Gastrocnemius medialis (tissue), 4 donors: ENCODE measurements at regions of chr5 and their contacts with region 1.

Region 1: DNA sequence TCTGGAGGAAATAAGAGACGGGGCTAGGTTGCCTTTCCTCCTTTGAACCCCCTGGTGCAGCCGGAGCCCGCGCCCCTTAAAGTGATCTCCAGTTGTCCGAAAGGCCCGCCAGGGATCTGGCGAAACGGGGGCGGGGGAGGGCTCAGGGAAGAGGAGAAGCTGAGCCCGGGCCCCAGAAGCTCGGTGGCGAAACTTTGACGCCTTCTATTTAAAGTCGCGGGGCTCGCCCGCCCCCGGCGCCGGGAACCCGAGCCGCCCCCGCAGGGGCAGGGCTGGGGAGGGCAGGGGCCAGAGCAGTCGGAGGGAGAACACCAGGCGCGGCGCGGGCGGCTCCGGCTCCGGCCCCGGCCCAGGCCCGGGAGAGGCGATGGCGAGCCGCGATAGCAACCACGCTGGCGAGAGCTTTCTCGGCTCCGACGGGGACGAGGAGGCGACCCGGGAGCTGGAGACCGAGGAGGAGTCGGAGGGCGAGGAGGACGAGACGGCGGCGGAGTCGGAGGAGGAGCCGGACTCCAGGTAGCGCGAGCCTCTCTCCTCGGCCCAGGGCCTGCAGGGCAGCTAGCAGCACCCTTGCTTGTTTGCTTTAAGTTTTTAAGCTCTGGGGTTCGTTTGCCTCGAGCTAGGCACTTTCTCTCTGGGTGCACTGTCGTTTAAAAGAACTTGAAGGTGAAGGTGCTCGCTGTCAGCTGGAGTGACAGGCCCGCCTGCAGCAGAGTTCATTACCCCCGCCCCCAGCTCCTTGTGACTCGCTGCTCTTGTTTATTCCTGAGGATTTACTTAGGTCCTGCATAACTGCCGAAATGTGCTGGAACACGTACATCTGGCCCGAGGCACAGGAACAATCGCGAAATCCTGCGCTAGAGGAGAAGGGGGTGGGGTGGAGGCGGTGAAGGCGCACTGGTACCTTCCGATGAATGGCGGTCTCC is at the start of gene CMYA5:
- DNase-seq: peak; percentile 94 to 98
- ATAC-seq: peak; percentile 75 to 79
- H3K4me3 ChIP-seq: peak within 1 kb of the TSS; percentile 75 to 83 (median 81)
- H3K27ac ChIP-seq: peak within 1 kb of the TSS; percentile 99
- H3K4me1 ChIP-seq: peaks cover 10 to 11% of the 10 kb centered on the region in 2 donors
- H3K27me3 ChIP-seq: no peaks in the 10 kb centered on the region
- CTCF ChIP-seq: no peak
- POLR2A ChIP-seq: peak; percentile 95
- total RNA-seq, gene CMYA5: 3,049 to 3,867 (median 3,338) TPM

Region 2: GRCh38 chr5:79514391-79515105 is 175.3 kb before region 1 on chr5:
- in situ Hi-C with region 1: no loop called
- intact Hi-C with region 1: loop called (anchors 5 kb)
- DNase-seq: peak; percentile 89 to 96
- ATAC-seq: peak; percentile 81 to 84
- H3K4me3 ChIP-seq: peak overlapping the region; percentile 78 to 91 (median 82)
- H3K27ac ChIP-seq: peak overlapping the region; percentile 93 to 97 (median 96)
- H3K4me1 ChIP-seq: peaks cover 9 to 18% of the 10 kb centered on the region in 2 donors
- H3K27me3 ChIP-seq: no peaks in the 10 kb centered on the region
- CTCF ChIP-seq: no peak
- POLR2A ChIP-seq: peak; percentile 34 to 97

Region 3: GRCh38 chr5:79759436-79759835 is 69.6 kb after region 1 on chr5:
- in situ Hi-C with region 1: no loop called
- intact Hi-C with region 1: no loop called
- DNase-seq: peak; percentile 42 to 66
- ATAC-seq: peak; percentile 76 to 96
- H3K4me3 ChIP-seq: no peak overlapping the region
- H3K27ac ChIP-seq: peak overlapping the region; percentile 27 to 82 (median 64)
- H3K4me1 ChIP-seq: no peaks in the 10 kb centered on the region
- H3K27me3 ChIP-seq: no peaks in the 10 kb centered on the region
- CTCF ChIP-seq: no peak
- POLR2A ChIP-seq: no peak

Region 4: GRCh38 chr5:79795790-79796398 is 106.1 kb after region 1 on chr5:
- in situ Hi-C with region 1: no loop called
- intact Hi-C with region 1: loop called (anchors 5 kb)
- DNase-seq: peak; percentile 23 to 61
- ATAC-seq: peak; percentile 6 to 31
- H3K4me3 ChIP-seq: no peak overlapping the region
- H3K27ac ChIP-seq: peak overlapping the region; percentile 22 to 86 (median 83)
- H3K4me1 ChIP-seq: peaks cover 50 to 56% of the 10 kb centered on the region in 2 donors
- H3K27me3 ChIP-seq: no peaks in the 10 kb centered on the region
- CTCF ChIP-seq: no peak
- POLR2A ChIP-seq: no peak

Region 5: GRCh38 chr5:79837761-79838605 is 148.2 kb after region 1 on chr5:
- in situ Hi-C with region 1: no loop called
- intact Hi-C with region 1: loop called (anchors 2 kb)
- DNase-seq: peak in 1 of 2 donors; percentile 64
- ATAC-seq: peak; percentile 29 to 41
- H3K4me3 ChIP-seq: no peak overlapping the region
- H3K27ac ChIP-seq: peak overlapping the region; percentile 14 to 62 (median 48)
- H3K4me1 ChIP-seq: peaks cover 36 to 44% of the 10 kb centered on the region in 2 donors
- H3K27me3 ChIP-seq: no peaks in the 10 kb centered on the region
- CTCF ChIP-seq: no peak
- POLR2A ChIP-seq: no peak